ENCODE measurements at regions of chr1 and their contacts with region 1.

Region 1: GRCh38 chr1:25895365-25895993 is 10.7 kb downstream of the STMN1 start:
- DNase-seq: peak; percentile 85
- H3K4me3 Mint-ChIP-seq: peak overlapping the region; percentile 1
- H3K27ac Mint-ChIP-seq: peak overlapping the region; percentile 16
- H3K4me1 Mint-ChIP-seq: peaks cover 5% of the 10 kb centered on the region
- H3K27me3 Mint-ChIP-seq: no peaks in the 10 kb centered on the region
- CTCF ChIP-seq: peak; percentile 95

Region 2: DNA sequence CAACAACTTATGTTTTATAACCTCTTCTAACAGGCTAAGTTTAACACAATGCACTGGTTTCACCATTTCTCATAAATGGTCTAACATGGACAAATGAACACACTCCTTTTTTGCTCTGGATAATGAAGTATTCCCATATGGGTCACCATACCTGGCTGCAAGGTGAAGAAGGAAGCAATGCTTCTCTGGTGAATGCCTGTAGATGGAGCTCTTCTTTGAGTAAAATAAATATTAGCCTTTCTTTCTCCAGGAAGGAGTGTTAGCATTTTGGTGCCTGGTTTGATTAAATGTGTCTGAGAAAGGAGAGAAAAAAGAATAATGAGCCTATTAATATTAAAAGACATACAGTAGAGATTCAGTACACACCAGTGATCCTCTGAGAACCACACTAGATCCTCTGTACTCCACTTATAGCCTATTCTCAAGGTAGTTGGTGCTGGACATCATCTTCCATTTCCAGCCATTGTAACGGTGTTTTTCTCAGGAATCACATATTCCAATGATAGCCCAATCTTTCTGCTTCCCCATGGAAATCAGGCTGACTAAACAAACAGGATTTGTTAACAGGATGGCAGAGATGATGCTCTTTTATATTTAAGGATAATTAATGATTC is 58.1 kb before region 1 on chr1:
- CTCF ChIA-PET with region 1: interaction called, 5 read pairs
- POLR2A ChIA-PET with region 1: interaction called, 7 read pairs
- intact Hi-C with region 1: loop called (anchors 2 kb)
- DNase-seq: peak; percentile 44
- H3K4me3 Mint-ChIP-seq: no peak overlapping the region
- H3K27ac Mint-ChIP-seq: no peak overlapping the region
- H3K4me1 Mint-ChIP-seq: peaks cover 12% of the 10 kb centered on the region
- H3K27me3 Mint-ChIP-seq: no peaks in the 10 kb centered on the region
- CTCF ChIP-seq: peak; percentile 45

Measured in MCF 10A (cell line).